ENCODE measurements at regions of chr4 and their contacts with region 1.

Region 1: GRCh38 chr4:56200275-56200674 is 187.0 kb downstream of the AASDH start:
- DNase-seq: no peak

Region 2: DNA sequence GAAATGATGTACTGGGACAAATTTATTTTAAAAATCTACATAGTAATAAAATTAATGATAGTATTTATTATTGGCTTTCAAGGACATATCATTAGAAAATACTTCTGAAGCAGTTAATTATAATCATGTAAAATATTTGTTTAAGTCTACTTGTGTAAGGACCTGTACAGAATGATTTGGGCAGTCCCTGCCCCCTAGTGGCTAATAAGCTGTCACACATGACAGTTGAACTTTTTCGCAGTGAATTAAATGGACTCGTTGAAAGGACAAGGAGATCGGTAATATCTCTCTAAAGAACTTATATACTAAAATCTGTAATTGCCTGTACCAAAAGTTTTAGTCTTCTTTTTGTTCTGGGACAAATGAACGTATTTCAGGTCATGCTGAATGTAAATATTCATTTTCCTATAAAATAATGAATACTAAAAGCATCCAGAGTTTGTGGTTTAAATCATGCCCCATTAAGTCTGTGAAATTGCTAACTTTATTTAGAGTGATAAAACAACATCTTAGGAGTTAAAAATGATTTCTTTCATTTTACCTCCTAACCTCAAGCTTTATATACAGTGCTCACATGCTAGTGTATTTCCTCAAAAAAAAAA is 333.2 kb before region 1 on chr4:
- CTCF ChIA-PET with region 1: no interaction called
- POLR2A ChIA-PET with region 1: no interaction called
- DNase-seq: peak; percentile 47

Region 3: GRCh38 chr4:56302097-56302496 is 101.8 kb after region 1 on chr4:
- CTCF ChIA-PET with region 1: interaction called, 10 read pairs
- POLR2A ChIA-PET with region 1: no interaction called
- DNase-seq: no peak